ENCODE measurements at regions of chr2 and their contacts with region 1.

Region 1: DNA sequence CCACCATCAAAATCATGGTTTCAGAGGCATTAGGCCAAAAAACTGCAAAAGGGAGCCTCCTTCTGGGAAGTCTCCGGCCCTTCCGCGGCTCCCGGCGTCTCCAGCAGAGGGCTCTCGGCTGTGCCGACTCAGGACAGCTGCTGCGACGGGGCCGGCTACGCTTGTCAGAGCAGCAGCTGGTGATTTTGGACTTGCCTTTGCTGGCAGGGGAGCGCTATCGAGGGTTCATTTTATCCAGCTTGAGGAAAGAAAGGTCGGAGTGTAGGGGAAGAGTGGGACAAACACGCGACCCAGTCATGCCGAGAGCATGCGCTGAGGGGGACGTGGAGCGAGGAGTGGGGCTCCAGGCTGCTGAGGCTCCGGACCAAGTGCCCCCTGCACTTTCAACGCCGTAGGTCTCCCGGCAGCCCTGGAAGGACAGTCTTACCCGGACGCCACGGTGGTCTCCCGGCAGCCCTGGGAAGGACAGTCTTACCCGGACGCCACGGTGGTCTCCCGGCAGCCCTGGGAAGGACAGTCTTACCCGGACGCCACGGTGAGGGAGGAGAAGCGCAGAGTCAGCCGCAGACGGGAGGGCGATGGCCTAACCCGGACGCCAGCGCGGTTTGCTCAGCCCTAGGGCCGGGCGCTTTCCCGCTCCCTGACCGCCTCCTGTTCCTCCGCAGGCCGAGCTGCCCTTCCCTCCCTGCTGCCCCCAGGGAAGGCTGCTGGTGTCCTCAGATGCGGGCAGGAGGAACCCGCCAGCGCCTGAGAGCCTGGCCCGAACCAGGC is 21.7 kb downstream of the DDX18 start:
- DNase-seq: peak; percentile 91
- ATAC-seq: peak; percentile 98

Region 2: GRCh38 chr2:118003396-118003824 is 167.2 kb after region 1 on chr2:
- intact Hi-C with region 1: loop called (anchors 5 kb)
- DNase-seq: no peak
- ATAC-seq: peak; percentile 94

Measured in left ventricle myocardium superior (tissue), 1 donor.